ENCODE measurements at regions of chr6 and their contacts with region 1.

Region 1: GRCh38 chr6:54992789-54993188 is 146.2 kb downstream of the FAM83B start:
- DNase-seq: peak in 1 of 2 experiments; percentile 18
- H3K4me3 ChIP-seq: no peak overlapping the region
- H3K4me3 Mint-ChIP-seq: no peak overlapping the region
- H3K27ac Mint-ChIP-seq: no peak overlapping the region
- H3K4me1 ChIP-seq: peaks cover 5% of the 10 kb centered on the region; the same call in 1 of the 2 replicates
- H3K4me1 Mint-ChIP-seq: no peaks in the 10 kb centered on the region
- H3K27me3 ChIP-seq: no peaks in the 10 kb centered on the region
- H3K27me3 Mint-ChIP-seq: no peaks in the 10 kb centered on the region
- CTCF ChIP-seq: peak; percentile 45 to 51

Region 2: DNA sequence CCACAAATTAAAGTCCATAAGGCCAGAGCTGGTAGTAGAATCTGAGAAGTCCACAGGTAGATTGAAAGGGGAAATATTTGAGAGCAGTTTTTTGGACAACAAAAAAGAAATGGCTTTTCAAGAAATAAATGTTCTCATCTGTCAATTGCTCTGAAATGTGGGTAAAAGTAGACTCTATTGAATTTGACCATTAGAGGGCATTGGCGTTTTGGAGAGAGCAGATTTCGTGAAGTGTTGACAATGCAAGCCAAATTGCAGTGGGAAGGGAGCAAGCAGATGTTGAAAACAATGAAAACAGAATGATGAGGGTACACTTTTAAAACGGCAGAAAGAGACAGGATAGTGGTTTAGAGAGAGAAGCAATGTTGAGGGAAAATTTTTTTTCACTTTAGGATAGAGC is 295.4 kb before region 1 on chr6:
- CTCF ChIA-PET with region 1: no interaction called
- POLR2A ChIA-PET with region 1: no interaction called
- intact Hi-C with region 1: loop called (anchors 2 kb)
- DNase-seq: peak in 1 of 2 experiments; percentile 10
- H3K4me3 ChIP-seq: no peak overlapping the region
- H3K4me3 Mint-ChIP-seq: peak overlapping the region; percentile 10
- H3K27ac Mint-ChIP-seq: peak overlapping the region; percentile 13
- H3K4me1 ChIP-seq: peaks cover 14% of the 10 kb centered on the region
- H3K4me1 Mint-ChIP-seq: peaks cover 8% of the 10 kb centered on the region
- H3K27me3 ChIP-seq: no peaks in the 10 kb centered on the region
- H3K27me3 Mint-ChIP-seq: no peaks in the 10 kb centered on the region
- CTCF ChIP-seq: peak; percentile 31 to 34